T-cell (primary cell): ENCODE measurements at regions of chr7 and their contacts with region 1.

Region 1: DNA sequence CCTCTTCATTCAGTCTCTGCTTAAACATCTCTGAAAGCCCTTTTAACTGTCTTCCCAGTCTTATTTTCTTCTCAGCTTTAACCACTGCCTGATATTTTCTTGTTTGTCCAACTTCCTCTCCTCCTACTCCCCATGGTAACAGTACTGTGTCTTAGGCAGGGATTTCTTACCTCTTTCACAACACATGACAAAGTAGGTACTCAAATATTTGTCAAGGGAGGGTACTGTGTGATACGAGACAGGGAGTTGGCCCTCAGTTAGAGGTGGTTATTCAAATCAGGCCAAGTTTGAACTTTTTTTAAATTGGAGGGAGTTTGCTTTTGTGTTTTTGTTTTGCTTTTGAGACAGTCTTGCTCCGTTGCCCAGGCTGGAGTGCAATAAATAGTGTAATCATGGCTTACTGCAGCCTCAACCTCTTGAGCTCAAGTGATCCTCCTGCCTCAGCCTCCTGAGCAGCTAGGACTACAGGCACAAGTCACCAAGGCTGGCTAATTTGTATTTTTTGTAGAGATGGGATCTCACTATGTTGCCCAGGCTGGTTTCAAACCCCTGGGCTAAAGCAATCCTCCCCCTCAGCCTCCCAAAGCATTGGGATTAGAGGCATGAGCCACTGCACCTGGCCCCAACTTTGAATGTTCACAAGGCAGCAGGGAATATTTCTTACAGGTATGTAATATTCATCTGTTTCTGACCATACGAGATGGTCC is 2.5 kb upstream of the KPNA7 start:
- DNase-seq: no peak
- ATAC-seq: no peak
- H3K4me3 ChIP-seq: no peak overlapping the region
- H3K4me3 Mint-ChIP-seq: no peak overlapping the region
- H3K27ac ChIP-seq: no peak overlapping the region
- H3K27ac Mint-ChIP-seq: no peak overlapping the region
- H3K4me1 ChIP-seq: no peaks in the 10 kb centered on the region
- H3K4me1 Mint-ChIP-seq: no peaks in the 10 kb centered on the region
- H3K27me3 ChIP-seq: peaks cover 0 to 18% of the 10 kb centered on the region in 2 experiments
- H3K27me3 Mint-ChIP-seq: peaks cover 8 to 11% of the 10 kb centered on the region in 2 donors

Region 2: GRCh38 chr7:98869597-98870120 is 340.8 kb before region 1 on chr7 and contains the start of gene TMEM130:
- CTCF ChIA-PET with region 1: no interaction called
- POLR2A ChIA-PET with region 1: no interaction called
- DNase-seq: peak in 2 of 35 experiments; percentile 1 to 11
- ATAC-seq: peak; percentile 25 to 57 (median 46)
- H3K4me3 ChIP-seq: peak within 1 kb of the TSS; percentile 27 to 35
- H3K4me3 Mint-ChIP-seq: peak within 1 kb of the TSS; percentile 71 to 83 (median 73)
- H3K27ac ChIP-seq: no peak within 1 kb of the TSS
- H3K27ac Mint-ChIP-seq: no peak within 1 kb of the TSS
- H3K4me1 ChIP-seq: peaks cover 0 to 20% of the 10 kb centered on the region in 2 experiments
- H3K4me1 Mint-ChIP-seq: peaks cover 5 to 7% (median 7%) of the 10 kb centered on the region in 3 donors
- H3K27me3 ChIP-seq: peaks cover 0 to 58% of the 10 kb centered on the region in 2 experiments
- H3K27me3 Mint-ChIP-seq: peaks cover 4 to 16% of the 10 kb centered on the region in 2 donors
- total RNA-seq, gene TMEM130: 0.43 TPM in 1 of 5 donors, not detected in the others

Region 3: GRCh38 chr7:99340659-99341058 is 130.2 kb after region 1 on chr7:
- CTCF ChIA-PET with region 1: interaction called in 1 of 2 experiments, 11 read pairs
- POLR2A ChIA-PET with region 1: no interaction called
- DNase-seq: no peak
- ATAC-seq: no peak
- H3K4me3 ChIP-seq: no peak overlapping the region
- H3K4me3 Mint-ChIP-seq: no peak overlapping the region
- H3K27ac ChIP-seq: no peak overlapping the region
- H3K27ac Mint-ChIP-seq: no peak overlapping the region
- H3K4me1 ChIP-seq: no peaks in the 10 kb centered on the region
- H3K4me1 Mint-ChIP-seq: peaks cover 0 to 6% (median 2%) of the 10 kb centered on the region in 3 donors
- H3K27me3 ChIP-seq: no peaks in the 10 kb centered on the region
- H3K27me3 Mint-ChIP-seq: no peaks in the 10 kb centered on the region